CD4-positive, alpha-beta T cell (primary cell): ENCODE measurements at regions of chr17 and their contacts with region 1.

Region 1: DNA sequence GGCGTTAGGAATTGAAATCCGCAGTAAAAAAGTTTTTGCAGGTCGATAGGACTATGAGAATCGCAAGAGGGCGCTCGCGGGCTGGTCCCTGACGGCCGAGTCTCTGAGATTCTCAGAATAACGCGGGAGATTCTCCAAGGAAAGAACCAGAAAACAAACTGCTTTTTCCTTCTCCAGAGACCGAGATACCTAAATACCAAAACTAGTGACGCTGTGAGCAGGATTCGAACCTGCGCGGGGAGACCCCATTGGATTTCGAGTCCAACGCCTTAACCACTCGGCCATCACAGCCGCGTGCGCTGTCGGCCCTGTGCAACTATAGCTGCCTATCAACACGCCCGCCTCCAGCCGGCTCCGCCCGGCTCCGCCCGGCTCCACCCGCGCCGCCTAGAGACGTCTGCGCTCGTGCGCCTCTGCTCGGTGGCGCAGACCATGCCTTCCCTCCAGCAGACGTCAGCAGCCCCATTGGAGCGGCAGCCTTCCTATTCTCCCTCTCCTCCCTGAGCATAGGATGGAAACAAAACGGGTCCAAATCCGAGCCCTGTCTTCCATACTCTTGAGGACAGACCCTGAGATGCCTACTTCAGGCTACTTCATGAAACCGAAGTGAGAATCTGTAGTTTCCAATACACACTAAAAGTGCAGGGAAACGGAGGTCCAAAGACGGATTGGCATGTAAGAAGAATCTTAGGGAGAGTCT is 13.4 kb downstream of the PER1 start:
- DNase-seq: peak; percentile 91 to 97 (median 95)
- ATAC-seq: peak; percentile 86
- H3K4me3 ChIP-seq: peak overlapping the region; percentile 71
- H3K4me3 Mint-ChIP-seq: no peak overlapping the region
- H3K27ac ChIP-seq: peak overlapping the region; percentile 71 to 91
- H3K27ac Mint-ChIP-seq: no peak overlapping the region
- H3K4me1 ChIP-seq: peaks cover 26% of the 10 kb centered on the region
- H3K4me1 Mint-ChIP-seq: peaks cover 2% of the 10 kb centered on the region
- H3K27me3 ChIP-seq: no peaks in the 10 kb centered on the region
- H3K27me3 Mint-ChIP-seq: peaks cover 2% of the 10 kb centered on the region
- CTCF ChIP-seq: peak; percentile 75

Region 2: GRCh38 chr17:8118769-8119580 is 19.8 kb before region 1 on chr17:
- CTCF ChIA-PET with region 1: interaction called, 42 read pairs
- POLR2A ChIA-PET with region 1: interaction called, 59 read pairs
- intact Hi-C with region 1: loop called (anchors 1 to 2 kb)
- DNase-seq: peak; percentile 75 to 92 (median 81)
- ATAC-seq: peak; percentile 60
- H3K4me3 ChIP-seq: peak overlapping the region; percentile 57
- H3K4me3 Mint-ChIP-seq: peak overlapping the region; percentile 99
- H3K27ac ChIP-seq: peak overlapping the region; percentile 7 to 50
- H3K27ac Mint-ChIP-seq: peak overlapping the region; percentile 100
- H3K4me1 ChIP-seq: peaks cover 65% of the 10 kb centered on the region
- H3K4me1 Mint-ChIP-seq: peaks cover 53% of the 10 kb centered on the region
- H3K27me3 ChIP-seq: peaks cover 45 to 53% of the 10 kb centered on the region in 2 experiments
- H3K27me3 Mint-ChIP-seq: peaks cover 66% of the 10 kb centered on the region
- CTCF ChIP-seq: peak; percentile 81

Region 3: DNA sequence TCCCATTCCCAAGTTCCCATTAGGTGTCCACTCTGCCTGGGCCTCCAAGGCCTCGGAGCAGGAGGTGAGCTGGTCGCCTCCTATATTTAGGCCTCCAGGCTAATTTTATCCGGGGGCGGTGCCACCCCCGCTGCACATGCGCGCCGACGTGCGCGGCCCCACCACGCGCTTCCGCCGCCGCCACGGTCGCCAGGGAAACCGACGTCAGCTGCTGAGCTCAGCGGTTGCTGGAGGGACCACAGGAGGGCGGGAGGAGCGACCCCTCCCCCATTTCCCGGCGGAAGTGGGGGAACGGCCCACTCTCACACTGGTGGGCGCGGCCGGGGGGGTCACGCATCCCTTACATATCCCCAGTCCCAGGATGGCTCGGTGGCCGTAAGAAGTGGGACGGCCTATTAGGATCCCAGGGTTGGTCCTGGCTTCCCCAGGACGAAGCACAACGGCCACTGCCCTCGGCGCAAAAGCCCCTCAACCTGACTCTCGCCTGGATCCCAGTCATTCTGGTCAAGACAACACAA is 12.4 kb after region 1 on chr17:
- CTCF ChIA-PET with region 1: interaction called, 32 read pairs
- POLR2A ChIA-PET with region 1: interaction called, 105 read pairs
- intact Hi-C with region 1: loop called in 1 of 2 experiments (anchors 1 kb)
- DNase-seq: peak; percentile 82 to 96 (median 90)
- ATAC-seq: peak; percentile 43
- H3K4me3 ChIP-seq: peak overlapping the region; percentile 75
- H3K4me3 Mint-ChIP-seq: peak overlapping the region; percentile 95
- H3K27ac ChIP-seq: peak overlapping the region; percentile 99 to 100
- H3K27ac Mint-ChIP-seq: no peak overlapping the region
- H3K4me1 ChIP-seq: peaks cover 85% of the 10 kb centered on the region
- H3K4me1 Mint-ChIP-seq: peaks cover 51% of the 10 kb centered on the region
- H3K27me3 ChIP-seq: no peaks in the 10 kb centered on the region
- H3K27me3 Mint-ChIP-seq: peaks cover 4% of the 10 kb centered on the region
- CTCF ChIP-seq: no peak

Region 4: DNA sequence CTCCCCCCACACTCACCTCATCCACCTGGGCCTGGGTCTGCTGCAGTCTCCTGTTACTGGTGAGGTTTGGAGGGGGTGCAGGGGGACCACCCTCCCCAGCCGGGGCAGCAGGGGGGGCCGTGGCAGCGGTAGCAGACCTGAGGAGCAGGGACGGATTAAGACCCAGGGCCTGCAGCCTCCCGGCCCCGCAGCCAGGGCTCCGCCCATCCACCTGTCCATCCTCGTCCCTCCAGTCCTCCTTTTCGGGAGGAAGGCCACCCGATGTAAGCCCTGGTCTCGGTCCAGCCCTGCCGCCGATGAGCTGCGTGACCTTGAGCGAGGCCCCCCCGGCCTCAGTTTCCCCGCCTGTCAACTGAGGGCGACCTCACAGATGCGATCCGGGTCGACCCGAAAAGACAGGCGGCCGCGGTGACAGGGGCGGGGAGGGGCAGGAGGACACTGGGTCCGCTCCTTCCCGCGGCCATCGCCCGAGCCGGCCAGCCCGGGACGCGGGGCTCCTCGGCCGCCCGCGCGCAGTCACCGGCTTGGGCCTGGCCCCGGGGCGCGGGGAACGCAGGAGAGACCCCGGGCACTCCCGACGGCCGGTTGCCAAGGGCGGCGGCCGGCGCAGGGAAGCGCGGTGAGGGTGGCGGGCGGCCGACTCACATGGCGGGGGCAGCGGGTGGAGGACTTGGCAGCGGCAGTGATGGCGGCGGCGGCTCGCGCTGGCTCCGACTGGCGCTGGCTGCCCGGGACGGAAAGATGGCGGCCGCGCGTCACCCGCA is 23.6 kb after region 1 on chr17 and contains the start of gene VAMP2:
- CTCF ChIA-PET with region 1: interaction called, 32 read pairs
- POLR2A ChIA-PET with region 1: interaction called, 105 read pairs
- intact Hi-C with region 1: loop called in 1 of 2 experiments (anchors 1 kb)
- DNase-seq: peak; percentile 71 to 95 (median 83)
- ATAC-seq: peak; percentile 47
- H3K4me3 ChIP-seq: peak within 1 kb of the TSS; percentile 86
- H3K4me3 Mint-ChIP-seq: peak within 1 kb of the TSS; percentile 95
- H3K27ac ChIP-seq: peak within 1 kb of the TSS; percentile 94 to 96
- H3K27ac Mint-ChIP-seq: no peak within 1 kb of the TSS
- H3K4me1 ChIP-seq: peaks cover 72% of the 10 kb centered on the region
- H3K4me1 Mint-ChIP-seq: peaks cover 67% of the 10 kb centered on the region
- H3K27me3 ChIP-seq: no peaks in the 10 kb centered on the region
- H3K27me3 Mint-ChIP-seq: no peaks in the 10 kb centered on the region
- CTCF ChIP-seq: no peak
- total RNA-seq, gene VAMP2: 351 to 366 TPM

Region 5: GRCh38 chr17:8189711-8190477 is 51.1 kb after region 1 on chr17 and contains the start of gene BORCS6:
- CTCF ChIA-PET with region 1: interaction called, 17 read pairs
- POLR2A ChIA-PET with region 1: interaction called, 36 read pairs
- intact Hi-C with region 1: loop called (anchors 1 to 5 kb)
- DNase-seq: peak; percentile 84 to 99 (median 92)
- ATAC-seq: peak; percentile 68
- H3K4me3 ChIP-seq: peak within 1 kb of the TSS; percentile 93
- H3K4me3 Mint-ChIP-seq: no peak within 1 kb of the TSS
- H3K27ac ChIP-seq: peak within 1 kb of the TSS; percentile 83
- H3K27ac Mint-ChIP-seq: peak within 1 kb of the TSS; percentile 85
- H3K4me1 ChIP-seq: peaks cover 77% of the 10 kb centered on the region
- H3K4me1 Mint-ChIP-seq: peaks cover 12% of the 10 kb centered on the region
- H3K27me3 ChIP-seq: no peaks in the 10 kb centered on the region
- H3K27me3 Mint-ChIP-seq: no peaks in the 10 kb centered on the region
- CTCF ChIP-seq: no peak
- total RNA-seq, gene BORCS6: 6.1 to 6.4 TPM

Region 6: GRCh38 chr17:8300627-8301242 is 161.9 kb after region 1 on chr17:
- CTCF ChIA-PET with region 1: interaction called, 6 read pairs
- POLR2A ChIA-PET with region 1: interaction called, 13 read pairs
- intact Hi-C with region 1: loop called in 1 of 2 experiments (anchors 1 kb)
- DNase-seq: peak; percentile 39 to 87 (median 58)
- ATAC-seq: peak; percentile 96
- H3K4me3 ChIP-seq: no peak overlapping the region
- H3K4me3 Mint-ChIP-seq: peak overlapping the region; percentile 49
- H3K27ac ChIP-seq: no peak overlapping the region
- H3K27ac Mint-ChIP-seq: peak overlapping the region; percentile 8
- H3K4me1 ChIP-seq: peaks cover 10% of the 10 kb centered on the region
- H3K4me1 Mint-ChIP-seq: peaks cover 13% of the 10 kb centered on the region
- H3K27me3 ChIP-seq: no peaks in the 10 kb centered on the region
- H3K27me3 Mint-ChIP-seq: no peaks in the 10 kb centered on the region
- CTCF ChIP-seq: peak; percentile 81

Region 7: GRCh38 chr17:8320990-8321389 is 182.2 kb after region 1 on chr17:
- CTCF ChIA-PET with region 1: no interaction called
- POLR2A ChIA-PET with region 1: no interaction called
- intact Hi-C with region 1: no loop called
- DNase-seq: no peak
- ATAC-seq: no peak
- H3K4me3 ChIP-seq: no peak overlapping the region
- H3K4me3 Mint-ChIP-seq: no peak overlapping the region
- H3K27ac ChIP-seq: no peak overlapping the region
- H3K27ac Mint-ChIP-seq: no peak overlapping the region
- H3K4me1 ChIP-seq: no peaks in the 10 kb centered on the region
- H3K4me1 Mint-ChIP-seq: peaks cover 3% of the 10 kb centered on the region
- H3K27me3 ChIP-seq: peaks cover 12 to 16% of the 10 kb centered on the region in 2 experiments
- H3K27me3 Mint-ChIP-seq: peaks cover 41% of the 10 kb centered on the region
- CTCF ChIP-seq: no peak

Region 8: GRCh38 chr17:8745586-8746500 is 607.0 kb after region 1 on chr17:
- CTCF ChIA-PET with region 1: no interaction called
- POLR2A ChIA-PET with region 1: no interaction called
- intact Hi-C with region 1: no loop called
- DNase-seq: peak; percentile 64 to 88 (median 76)
- ATAC-seq: peak; percentile 80
- H3K4me3 ChIP-seq: peak overlapping the region; percentile 78
- H3K4me3 Mint-ChIP-seq: peak overlapping the region; percentile 93
- H3K27ac ChIP-seq: peak overlapping the region; percentile 44 to 51
- H3K27ac Mint-ChIP-seq: peak overlapping the region; percentile 83
- H3K4me1 ChIP-seq: peaks cover 23% of the 10 kb centered on the region
- H3K4me1 Mint-ChIP-seq: peaks cover 12% of the 10 kb centered on the region
- H3K27me3 ChIP-seq: no peaks in the 10 kb centered on the region
- H3K27me3 Mint-ChIP-seq: no peaks in the 10 kb centered on the region
- CTCF ChIP-seq: peak; percentile 99